PC-3 (cell line): ENCODE measurements at regions of chr19 and their contacts with region 1.

Region 1: DNA sequence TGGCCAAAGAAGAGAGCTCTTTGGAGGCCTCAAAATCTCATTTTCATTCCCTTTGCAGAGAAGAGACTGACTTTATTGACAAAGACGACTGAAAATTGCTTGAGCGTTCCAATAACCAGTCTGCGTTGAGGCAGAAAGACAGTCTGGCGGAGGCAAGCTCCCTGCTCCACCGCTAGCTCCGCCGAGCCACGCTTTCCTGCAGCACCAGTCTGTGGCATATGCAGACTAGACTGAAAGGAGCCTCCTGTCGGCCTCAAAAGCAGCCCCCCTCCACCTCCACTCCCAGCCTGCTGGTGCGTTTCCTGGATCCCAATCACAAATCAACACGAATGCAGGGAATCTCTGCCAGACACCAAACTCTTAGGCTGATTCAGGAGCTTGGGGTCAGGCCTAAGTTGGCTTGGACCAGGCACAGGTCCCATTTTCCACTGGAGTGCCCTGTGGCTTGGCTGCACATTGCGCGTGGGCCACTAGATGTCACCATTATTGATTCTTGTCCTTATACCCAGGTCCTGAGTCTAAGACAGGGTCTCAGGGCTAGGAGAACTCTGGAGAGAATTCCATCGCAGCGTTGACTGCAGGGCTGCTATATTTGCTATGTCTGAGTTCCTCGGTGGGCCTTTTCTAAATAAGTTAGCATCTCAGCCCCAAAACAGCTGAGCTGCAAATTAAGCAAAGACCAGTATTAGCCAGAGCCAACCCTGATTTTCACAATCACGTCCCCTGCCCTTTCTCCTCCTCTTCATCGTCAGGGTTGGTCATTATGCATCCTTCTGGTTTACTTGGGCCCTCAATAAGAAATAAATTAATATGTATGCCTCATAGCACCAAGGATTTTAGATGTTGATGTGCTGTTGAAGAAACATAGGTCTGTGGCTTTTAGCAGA is 5.2 kb upstream of the ZNF507 start:
- DNase-seq: peak; percentile 60
- ATAC-seq: peak; percentile 78
- H3K4me3 ChIP-seq: no peak overlapping the region
- H3K27ac ChIP-seq: no peak overlapping the region
- H3K4me1 ChIP-seq: peaks cover 11% of the 10 kb centered on the region
- H3K27me3 ChIP-seq: no peaks in the 10 kb centered on the region
- CTCF ChIP-seq: peak; percentile 68

Region 2: GRCh38 chr19:32373585-32374295 is 33.5 kb after region 1 on chr19:
- CTCF ChIA-PET with region 1: interaction called, 3 read pairs
- POLR2A ChIA-PET with region 1: no interaction called
- intact Hi-C with region 1: loop called (anchors 5 kb)
- DNase-seq: peak; percentile 96
- ATAC-seq: peak; percentile 98
- H3K4me3 ChIP-seq: peak overlapping the region; percentile 44; the same call in 1 of the 2 replicates
- H3K27ac ChIP-seq: peak overlapping the region; percentile 82
- H3K4me1 ChIP-seq: peaks cover 32% of the 10 kb centered on the region
- H3K27me3 ChIP-seq: no peaks in the 10 kb centered on the region
- CTCF ChIP-seq: no peak